OCI-LY7 (cell line): ENCODE measurements at regions of chr3 and their contacts with region 1.

Region 1: GRCh38 chr3:66276705-66277274 is 56.0 kb downstream of the SLC25A26 start:
- DNase-seq: peak; percentile 77
- H3K4me3 ChIP-seq: no peak overlapping the region
- H3K27ac ChIP-seq: no peak overlapping the region
- H3K4me1 ChIP-seq: no peaks in the 10 kb centered on the region
- CTCF ChIP-seq: peak; percentile 94

Region 2: GRCh38 chr3:66372681-66373350 is 96.0 kb after region 1 on chr3:
- CTCF ChIA-PET with region 1: no interaction called
- POLR2A ChIA-PET with region 1: no interaction called
- intact Hi-C with region 1: loop called (anchors 2 kb)
- DNase-seq: peak; percentile 26
- H3K4me3 ChIP-seq: no peak overlapping the region
- H3K27ac ChIP-seq: no peak overlapping the region
- H3K4me1 ChIP-seq: peaks cover 24% of the 10 kb centered on the region
- CTCF ChIP-seq: peak; percentile 38

Region 3: DNA sequence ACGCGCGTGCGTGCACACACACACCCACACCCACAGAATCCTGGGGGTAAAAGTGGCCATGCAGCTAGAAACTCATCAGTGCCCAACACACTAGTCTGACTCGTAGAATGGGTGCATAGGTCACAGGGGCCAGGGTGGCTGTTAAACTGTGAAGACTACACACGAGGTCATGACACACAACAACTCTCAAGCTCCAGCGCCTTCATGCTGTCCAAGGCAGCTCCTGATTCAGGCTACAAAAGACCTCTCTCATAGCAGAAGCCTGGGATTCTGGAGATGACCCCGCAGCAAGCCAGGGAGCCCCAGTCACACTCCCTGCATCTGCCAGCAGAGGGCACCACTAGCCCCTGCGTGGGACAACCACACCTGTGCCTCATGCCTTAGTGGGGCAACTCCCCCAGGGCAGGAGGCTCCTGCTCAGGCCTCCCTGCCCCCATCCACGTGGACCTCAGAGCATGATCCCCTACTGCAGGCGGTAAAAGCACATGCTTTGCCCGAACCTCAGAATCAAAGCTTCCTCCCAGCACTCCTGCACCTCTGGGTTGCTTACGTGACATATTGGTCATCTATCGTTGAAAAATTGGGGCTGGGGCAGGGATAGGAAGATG is 130.9 kb after region 1 on chr3:
- CTCF ChIA-PET with region 1: no interaction called
- POLR2A ChIA-PET with region 1: no interaction called
- intact Hi-C with region 1: loop called (anchors 1 kb)
- DNase-seq: peak; percentile 78
- H3K4me3 ChIP-seq: no peak overlapping the region
- H3K27ac ChIP-seq: no peak overlapping the region
- H3K4me1 ChIP-seq: peaks cover 34% of the 10 kb centered on the region
- CTCF ChIP-seq: peak; percentile 91

Region 4: GRCh38 chr3:66816090-66816761 is 539.4 kb after region 1 on chr3:
- CTCF ChIA-PET with region 1: no interaction called
- POLR2A ChIA-PET with region 1: interaction called, 3 read pairs
- intact Hi-C with region 1: loop called (anchors 2 kb)
- DNase-seq: peak; percentile 81
- H3K4me3 ChIP-seq: no peak overlapping the region
- H3K27ac ChIP-seq: no peak overlapping the region
- H3K4me1 ChIP-seq: no peaks in the 10 kb centered on the region
- CTCF ChIP-seq: peak; percentile 82